ENCODE measurements at regions of chr15 and their contacts with region 1.

Region 1: DNA sequence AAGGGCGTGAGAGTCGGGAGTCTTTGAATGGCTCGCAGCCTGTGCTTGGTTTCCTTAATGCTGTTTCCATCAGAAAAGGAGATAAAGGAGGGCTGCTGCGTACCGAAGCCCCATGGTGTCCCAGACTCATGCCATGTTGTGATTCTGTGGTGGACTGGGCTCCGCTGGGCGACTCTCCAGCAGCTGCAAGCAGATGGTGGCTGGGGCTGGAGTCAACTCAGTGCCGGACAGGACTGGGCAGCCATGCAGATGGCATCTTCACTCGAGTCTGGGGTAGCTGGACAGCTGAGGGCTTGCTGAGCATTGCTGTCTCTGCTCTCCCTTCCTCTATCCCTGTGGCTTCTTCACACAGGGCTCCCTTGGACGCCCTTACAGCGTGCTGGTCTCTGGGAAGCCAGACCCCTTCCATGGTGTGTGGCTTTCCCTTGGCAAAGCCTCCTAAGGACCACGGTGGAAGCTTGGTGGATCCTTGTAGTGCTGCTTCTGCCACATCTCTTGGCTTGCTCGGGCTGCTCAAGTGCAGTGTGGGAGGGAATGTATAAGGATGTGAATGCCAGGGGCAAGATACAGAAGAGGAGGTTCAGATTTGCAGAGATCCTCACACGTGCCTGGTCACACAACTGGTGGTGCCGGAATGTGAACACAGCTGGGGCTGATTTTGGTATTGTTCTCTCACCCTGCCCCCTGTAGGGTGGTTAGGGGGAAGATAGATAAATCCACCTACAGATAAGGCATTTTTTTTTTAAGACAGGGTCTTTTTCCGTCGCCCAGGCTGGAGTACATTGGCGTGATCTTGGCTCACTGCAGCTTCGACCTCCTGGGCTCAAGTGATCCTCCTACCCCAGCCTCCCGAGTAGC is 9.0 kb downstream of the NIPA1 start:
- DNase-seq: no peak
- H3K4me3 Mint-ChIP-seq: no peak overlapping the region
- H3K27ac Mint-ChIP-seq: no peak overlapping the region
- H3K4me1 Mint-ChIP-seq: peaks cover 45% of the 10 kb centered on the region
- H3K27me3 Mint-ChIP-seq: no peaks in the 10 kb centered on the region

Region 2: GRCh38 chr15:22735781-22736180 is 59.7 kb before region 1 on chr15:
- CTCF ChIA-PET with region 1: no interaction called
- intact Hi-C with region 1: loop called (anchors 10 kb)
- DNase-seq: no peak
- H3K4me3 Mint-ChIP-seq: no peak overlapping the region
- H3K27ac Mint-ChIP-seq: no peak overlapping the region
- H3K4me1 Mint-ChIP-seq: peaks cover 13% of the 10 kb centered on the region
- H3K27me3 Mint-ChIP-seq: peaks cover 10% of the 10 kb centered on the region

Region 3: DNA sequence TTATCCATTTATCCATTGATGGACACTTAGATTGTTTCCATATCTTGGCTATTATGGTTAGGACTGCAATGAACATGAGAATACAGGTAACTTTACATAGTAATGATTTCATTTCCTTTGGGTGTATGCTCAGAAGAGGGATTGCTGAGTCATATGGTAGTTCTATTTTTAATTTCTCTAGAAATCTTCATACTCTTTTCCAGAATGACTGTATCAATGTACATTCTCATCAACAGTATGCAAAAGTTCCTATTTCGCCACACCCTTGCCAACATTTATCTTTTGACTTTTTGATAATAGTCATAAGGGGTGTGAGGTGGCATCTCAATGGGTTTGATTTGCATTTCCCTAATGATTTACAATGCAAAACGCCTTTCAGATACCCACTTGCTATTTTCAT is 15.2 kb before region 1 on chr15:
- CTCF ChIA-PET with region 1: interaction called, 4 read pairs
- intact Hi-C with region 1: loop called (anchors 2 kb)
- DNase-seq: peak; percentile 47
- H3K4me3 Mint-ChIP-seq: no peak overlapping the region
- H3K27ac Mint-ChIP-seq: no peak overlapping the region
- H3K4me1 Mint-ChIP-seq: peaks cover 22% of the 10 kb centered on the region
- H3K27me3 Mint-ChIP-seq: peaks cover 2% of the 10 kb centered on the region

Region 4: DNA sequence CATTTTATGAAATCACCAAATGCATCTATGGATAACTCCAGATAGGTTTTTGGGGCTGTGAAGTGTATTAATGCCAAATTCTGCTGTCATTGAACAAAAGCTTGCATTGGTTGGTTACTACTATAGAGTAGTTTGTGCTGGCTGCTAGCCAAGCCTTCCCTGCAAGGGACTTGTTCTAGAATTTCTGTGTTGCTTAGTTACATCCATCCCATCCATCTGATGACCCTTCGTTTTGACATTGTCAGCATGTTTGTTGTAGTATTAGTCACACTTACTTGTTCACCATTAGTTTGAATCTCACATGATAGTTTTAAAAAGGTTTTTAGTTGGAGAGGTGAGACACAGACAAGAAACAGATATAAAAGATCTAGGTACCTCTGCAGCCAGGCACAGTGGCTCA is 36.0 kb after region 1 on chr15:
- CTCF ChIA-PET with region 1: no interaction called
- intact Hi-C with region 1: loop called (anchors 2 kb)
- DNase-seq: no peak
- H3K4me3 Mint-ChIP-seq: no peak overlapping the region
- H3K27ac Mint-ChIP-seq: no peak overlapping the region
- H3K4me1 Mint-ChIP-seq: no peaks in the 10 kb centered on the region
- H3K27me3 Mint-ChIP-seq: no peaks in the 10 kb centered on the region